Esophagus squamous epithelium (tissue), 5 donors: ENCODE measurements at regions of chr15 and their contacts with region 1.

Region 1: GRCh38 chr15:63752075-63752684 is 81.6 kb downstream of the HERC1 start:
- DNase-seq: no peak
- H3K4me3 ChIP-seq: no peak overlapping the region
- H3K27ac ChIP-seq: no peak overlapping the region
- H3K4me1 ChIP-seq: no peaks in the 10 kb centered on the region
- H3K27me3 ChIP-seq: no peaks in the 10 kb centered on the region
- CTCF ChIP-seq: peak; percentile 49 to 87 (median 78)
- POLR2A ChIP-seq: no peak

Region 2: GRCh38 chr15:63860155-63860554 is 108.0 kb after region 1 on chr15:
- intact Hi-C with region 1: no loop called
- DNase-seq: no peak
- H3K4me3 ChIP-seq: no peak overlapping the region
- H3K27ac ChIP-seq: no peak overlapping the region
- H3K4me1 ChIP-seq: no peaks in the 10 kb centered on the region
- H3K27me3 ChIP-seq: no peaks in the 10 kb centered on the region
- CTCF ChIP-seq: no peak
- POLR2A ChIP-seq: peak in 1 of 4 donors; percentile 13

Region 3: DNA sequence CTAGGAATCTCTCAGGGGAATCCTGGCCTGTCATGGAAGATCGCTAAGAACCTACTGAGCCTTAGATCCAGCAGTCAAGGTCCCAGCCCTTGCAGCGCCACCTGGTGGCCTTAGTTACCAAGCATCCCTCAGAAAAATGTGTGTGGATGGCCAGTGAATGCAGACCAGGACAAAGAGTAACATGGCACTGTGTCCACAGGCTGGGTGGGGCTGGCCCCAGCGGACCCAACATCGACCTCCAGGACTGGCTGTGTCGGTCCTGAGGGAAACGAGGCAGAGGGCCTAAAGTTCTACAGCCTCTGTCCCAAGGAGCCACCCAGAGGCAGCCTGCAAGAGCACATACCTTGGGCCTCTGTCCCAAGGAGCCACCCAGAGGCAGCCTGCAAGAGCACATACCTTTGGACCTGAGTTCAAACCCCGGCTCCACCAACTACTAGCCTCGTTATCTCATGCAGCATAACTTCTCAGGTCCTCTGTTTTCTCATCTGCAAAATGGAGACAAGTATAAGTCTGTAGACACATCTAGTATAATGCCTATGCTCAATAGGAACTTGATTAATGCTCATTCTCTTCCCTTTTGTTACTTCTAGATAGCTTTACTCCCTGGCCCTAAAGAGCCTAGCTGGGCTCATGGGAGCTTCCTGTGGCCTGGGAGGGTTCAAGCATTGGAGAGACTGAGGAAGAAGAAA is 139.0 kb after region 1 on chr15:
- intact Hi-C with region 1: loop called (anchors 5 kb)
- DNase-seq: peak; percentile 11
- H3K4me3 ChIP-seq: no peak overlapping the region
- H3K27ac ChIP-seq: no peak overlapping the region
- H3K4me1 ChIP-seq: peaks cover 0 to 38% (median 9%) of the 10 kb centered on the region in 3 donors
- H3K27me3 ChIP-seq: no peaks in the 10 kb centered on the region
- CTCF ChIP-seq: peak; percentile 43 to 87 (median 85)
- POLR2A ChIP-seq: no peak

Region 4: DNA sequence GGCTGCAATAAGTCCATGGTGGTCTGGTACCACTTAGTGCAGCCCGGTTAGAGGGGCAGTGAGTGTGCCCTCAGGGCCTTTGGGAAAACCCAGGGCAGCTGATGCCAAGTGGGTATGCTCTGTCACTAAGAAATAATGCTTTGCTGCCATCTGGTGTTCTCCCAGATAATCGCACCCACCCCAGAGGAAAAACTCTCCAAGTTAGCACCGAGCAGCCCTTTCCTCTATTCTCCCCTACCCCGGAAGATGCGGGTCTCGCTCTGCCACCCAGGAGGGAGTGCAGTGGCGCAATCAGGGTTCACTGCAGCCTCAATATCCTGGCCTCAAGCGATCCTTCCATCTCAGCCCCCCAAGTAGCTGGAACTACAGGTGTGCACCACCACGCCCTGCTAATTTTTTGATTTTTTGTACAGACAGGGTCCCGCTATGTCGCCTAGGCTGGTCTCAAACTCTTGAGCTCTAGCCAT is 315.4 kb after region 1 on chr15:
- intact Hi-C with region 1: loop called (anchors 5 kb)
- DNase-seq: no peak
- H3K4me3 ChIP-seq: no peak overlapping the region
- H3K27ac ChIP-seq: no peak overlapping the region
- H3K4me1 ChIP-seq: peaks cover 4 to 36% (median 12%) of the 10 kb centered on the region in 3 donors
- H3K27me3 ChIP-seq: no peaks in the 10 kb centered on the region
- CTCF ChIP-seq: peak; percentile 69 to 87 (median 84)
- POLR2A ChIP-seq: no peak